Activated CD4-positive, alpha-beta memory T cell treated with anti-CD3 and anti-CD28 coated beads, Interleukin-2, amount 10 ng/mL, durations not matched to agents 7 days and 5 days (primary cell): ENCODE measurements at regions of chr3 and their contacts with region 1.

Region 1: GRCh38 chr3:33883538-33883950 is 85.1 kb downstream of the PDCD6IP start:
- DNase-seq: no peak
- H3K4me3 Mint-ChIP-seq: no peak overlapping the region
- H3K27ac Mint-ChIP-seq: no peak overlapping the region
- H3K4me1 Mint-ChIP-seq: peaks cover 1% of the 10 kb centered on the region
- H3K27me3 Mint-ChIP-seq: peaks cover 6% of the 10 kb centered on the region

Region 2: DNA sequence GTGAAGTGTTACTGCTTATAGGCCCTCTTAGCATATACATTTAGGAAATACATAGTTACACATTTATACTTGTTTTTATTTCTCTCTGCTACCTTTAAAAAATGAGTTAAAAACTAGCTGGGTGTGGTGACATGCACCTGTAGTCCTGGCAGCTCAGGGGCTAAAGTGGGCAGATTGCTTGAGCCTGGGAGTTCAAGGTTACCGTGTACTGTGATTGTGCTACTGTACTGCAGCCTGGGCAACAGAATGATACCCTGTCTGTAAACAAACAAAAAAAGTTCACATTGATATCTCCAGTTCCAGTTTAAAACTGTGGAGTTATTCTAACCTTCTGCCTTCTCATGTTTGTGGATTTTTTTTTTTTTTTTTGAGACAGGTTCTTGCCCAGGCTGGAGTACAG is 73.0 kb before region 1 on chr3:
- CTCF ChIA-PET with region 1: no interaction called
- POLR2A ChIA-PET with region 1: no interaction called
- DNase-seq: no peak
- H3K4me3 Mint-ChIP-seq: no peak overlapping the region
- H3K27ac Mint-ChIP-seq: no peak overlapping the region
- H3K4me1 Mint-ChIP-seq: peaks cover 43% of the 10 kb centered on the region
- H3K27me3 Mint-ChIP-seq: no peaks in the 10 kb centered on the region

Region 3: GRCh38 chr3:33865133-33865532 is 18.4 kb before region 1 on chr3:
- CTCF ChIA-PET with region 1: no interaction called
- POLR2A ChIA-PET with region 1: no interaction called
- DNase-seq: no peak
- H3K4me3 Mint-ChIP-seq: no peak overlapping the region
- H3K27ac Mint-ChIP-seq: no peak overlapping the region
- H3K4me1 Mint-ChIP-seq: peaks cover 3% of the 10 kb centered on the region
- H3K27me3 Mint-ChIP-seq: no peaks in the 10 kb centered on the region

Region 4: DNA sequence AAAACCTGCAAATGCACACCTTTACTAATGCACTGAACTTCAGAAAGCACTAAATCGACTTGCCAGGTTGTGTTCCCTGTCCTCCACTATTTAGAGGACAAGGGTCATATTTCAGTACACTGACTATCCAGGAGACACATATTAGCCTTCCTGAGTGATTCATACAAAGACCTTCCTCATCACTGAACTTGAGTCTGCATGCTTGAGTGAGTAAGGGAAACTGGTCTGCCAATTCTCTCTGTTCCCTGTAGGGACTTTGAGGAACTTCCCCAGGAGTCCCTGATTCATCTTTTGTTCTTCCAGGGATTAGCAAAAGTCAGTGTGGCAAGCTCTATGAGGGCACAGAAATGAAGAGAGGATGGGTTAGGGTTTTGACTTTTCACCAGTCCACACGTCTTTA is 480.8 kb after region 1 on chr3:
- CTCF ChIA-PET with region 1: no interaction called
- POLR2A ChIA-PET with region 1: no interaction called
- DNase-seq: no peak
- H3K4me3 Mint-ChIP-seq: no peak overlapping the region
- H3K27ac Mint-ChIP-seq: no peak overlapping the region
- H3K4me1 Mint-ChIP-seq: no peaks in the 10 kb centered on the region
- H3K27me3 Mint-ChIP-seq: no peaks in the 10 kb centered on the region

Region 5: DNA sequence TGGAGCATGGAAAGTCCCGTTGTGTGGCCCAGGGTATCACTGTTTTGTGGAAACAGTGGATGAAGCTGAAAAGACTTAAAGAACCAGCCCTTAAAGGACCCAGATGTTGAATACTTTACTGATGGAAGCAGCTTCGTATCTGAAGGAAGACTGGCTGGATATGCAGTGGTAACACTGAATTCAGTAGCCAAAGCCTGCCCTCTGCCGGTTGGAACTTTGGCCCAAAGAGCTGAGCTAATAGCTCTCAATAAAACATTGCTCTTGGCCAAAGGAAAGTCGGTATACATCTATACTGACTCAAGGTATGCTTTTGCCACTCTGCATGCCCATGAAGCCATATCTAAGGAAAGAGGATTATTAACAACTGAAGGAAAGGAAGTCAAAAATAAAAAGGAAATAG is 800.3 kb after region 1 on chr3:
- CTCF ChIA-PET with region 1: interaction called, 20 read pairs
- POLR2A ChIA-PET with region 1: no interaction called
- DNase-seq: no peak
- H3K4me3 Mint-ChIP-seq: no peak overlapping the region
- H3K27ac Mint-ChIP-seq: no peak overlapping the region
- H3K4me1 Mint-ChIP-seq: no peaks in the 10 kb centered on the region
- H3K27me3 Mint-ChIP-seq: no peaks in the 10 kb centered on the region